CD4-positive, alpha-beta memory T cell (primary cell): ENCODE measurements at regions of chr20 and their contacts with region 1.

Region 1: GRCh38 chr20:34955232-34956040 is at the starts of genes GSS and MYH7B:
- DNase-seq: peak; percentile 92 to 97 (median 94)
- H3K4me3 ChIP-seq: peak within 1 kb of the TSS; percentile 45 to 88
- H3K4me3 Mint-ChIP-seq: peak within 1 kb of the TSS; percentile 93 to 100 (median 97)
- H3K27ac ChIP-seq: peak within 1 kb of the TSS; percentile 71
- H3K27ac Mint-ChIP-seq: peak within 1 kb of the TSS; percentile 93 to 98 (median 98)
- H3K4me1 ChIP-seq: peaks cover 13% of the 10 kb centered on the region
- H3K4me1 Mint-ChIP-seq: peaks cover 19 to 28% (median 21%) of the 10 kb centered on the region in 4 donors
- H3K27me3 ChIP-seq: no peaks in the 10 kb centered on the region
- H3K27me3 Mint-ChIP-seq: no peaks in the 10 kb centered on the region
- total RNA-seq, gene GSS: 41.0 to 43.3 TPM
- total RNA-seq, gene MYH7B: 0.39 to 0.47 TPM

Region 2: DNA sequence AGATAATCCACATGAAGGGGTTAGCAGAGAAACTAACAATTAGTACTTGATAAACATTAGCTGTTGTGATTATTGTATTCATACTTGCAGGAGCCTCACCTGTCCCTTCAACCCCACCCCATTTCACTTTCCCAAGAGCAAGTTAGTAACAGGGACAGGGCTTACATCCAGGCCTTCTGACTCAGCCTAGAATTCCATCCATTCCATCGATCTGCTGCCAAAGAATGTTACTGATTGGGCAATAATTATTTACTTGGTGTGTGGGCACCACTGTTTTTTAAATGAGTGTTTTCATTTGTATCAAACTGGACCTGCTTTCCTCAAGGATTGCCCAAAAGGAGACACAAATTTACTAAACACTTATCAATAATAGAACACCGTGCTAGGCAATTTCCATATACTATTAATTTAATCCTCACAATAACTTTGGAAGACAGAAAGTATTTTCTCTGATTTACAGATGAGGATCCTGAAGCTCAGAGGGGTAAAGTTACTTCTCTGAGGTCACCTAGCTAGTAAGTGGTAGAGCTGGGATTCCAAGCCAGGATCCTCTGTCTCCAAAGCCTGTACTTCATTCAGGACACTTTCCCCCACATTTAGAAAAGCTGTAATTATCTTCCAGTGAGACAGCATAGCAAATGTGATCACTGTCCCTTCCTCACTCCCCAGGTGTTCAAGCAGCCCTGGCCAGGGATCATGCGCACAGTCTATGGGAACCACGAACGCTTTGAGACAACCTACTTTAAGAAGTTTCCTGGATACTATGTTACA is 32.6 kb before region 1 on chr20:
- CTCF ChIA-PET with region 1: no interaction called
- POLR2A ChIA-PET with region 1: interaction called, 3 read pairs
- intact Hi-C with region 1: loop called (anchors 1 kb)
- DNase-seq: no peak
- H3K4me3 ChIP-seq: no peak overlapping the region
- H3K4me3 Mint-ChIP-seq: no peak overlapping the region
- H3K27ac ChIP-seq: no peak overlapping the region
- H3K27ac Mint-ChIP-seq: no peak overlapping the region
- H3K4me1 ChIP-seq: peaks cover 11% of the 10 kb centered on the region
- H3K4me1 Mint-ChIP-seq: peaks cover 9 to 28% (median 16%) of the 10 kb centered on the region in 4 donors
- H3K27me3 ChIP-seq: no peaks in the 10 kb centered on the region
- H3K27me3 Mint-ChIP-seq: no peaks in the 10 kb centered on the region

Region 3: DNA sequence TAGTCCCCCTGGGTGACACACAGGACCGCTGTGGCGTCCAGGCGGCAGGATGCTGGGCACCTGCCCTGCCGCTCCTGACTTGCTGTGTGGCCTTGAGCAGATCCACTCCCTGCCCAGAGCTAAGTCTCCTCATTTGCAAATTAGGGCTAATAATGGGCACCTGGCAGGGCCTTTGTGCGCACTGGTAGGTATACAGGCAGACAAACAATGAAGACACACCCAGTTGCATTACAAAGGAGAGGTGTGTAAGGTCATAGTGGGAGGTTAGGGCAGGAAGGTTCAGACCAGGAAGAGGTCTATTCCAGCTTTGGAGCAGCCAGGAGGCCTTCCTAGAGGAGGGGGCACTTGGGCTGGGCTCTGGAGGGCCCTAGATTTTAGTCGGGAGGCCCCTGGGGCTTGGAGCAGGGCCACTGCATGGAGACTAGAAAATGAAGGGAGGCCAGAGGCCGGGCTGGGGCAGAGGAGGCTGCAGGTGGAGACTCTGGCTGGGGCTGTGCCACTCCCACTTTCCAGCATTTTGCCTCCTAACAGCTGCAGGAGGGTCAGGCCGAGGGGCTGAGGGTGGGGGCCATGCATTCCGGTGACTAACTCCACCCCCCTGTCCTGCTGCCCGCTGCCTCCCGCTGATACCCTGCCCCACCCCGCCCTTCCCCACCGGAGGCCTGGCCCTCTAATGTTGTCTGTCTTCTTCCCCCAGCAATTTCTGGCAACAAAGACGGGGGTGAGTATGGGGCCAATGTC is 28.7 kb after region 1 on chr20:
- CTCF ChIA-PET with region 1: no interaction called
- POLR2A ChIA-PET with region 1: no interaction called
- intact Hi-C with region 1: no loop called
- DNase-seq: no peak
- H3K4me3 ChIP-seq: no peak overlapping the region
- H3K4me3 Mint-ChIP-seq: no peak overlapping the region
- H3K27ac ChIP-seq: no peak overlapping the region
- H3K27ac Mint-ChIP-seq: no peak overlapping the region
- H3K4me1 ChIP-seq: no peaks in the 10 kb centered on the region
- H3K4me1 Mint-ChIP-seq: peaks cover 0 to 3% (median under 1%) of the 10 kb centered on the region in 4 donors
- H3K27me3 ChIP-seq: peaks cover 4% of the 10 kb centered on the region
- H3K27me3 Mint-ChIP-seq: peaks cover 9 to 15% of the 10 kb centered on the region in 2 donors